BJ (cell line): ENCODE measurements at regions of chr19 and their contacts with region 1.

Region 1: DNA sequence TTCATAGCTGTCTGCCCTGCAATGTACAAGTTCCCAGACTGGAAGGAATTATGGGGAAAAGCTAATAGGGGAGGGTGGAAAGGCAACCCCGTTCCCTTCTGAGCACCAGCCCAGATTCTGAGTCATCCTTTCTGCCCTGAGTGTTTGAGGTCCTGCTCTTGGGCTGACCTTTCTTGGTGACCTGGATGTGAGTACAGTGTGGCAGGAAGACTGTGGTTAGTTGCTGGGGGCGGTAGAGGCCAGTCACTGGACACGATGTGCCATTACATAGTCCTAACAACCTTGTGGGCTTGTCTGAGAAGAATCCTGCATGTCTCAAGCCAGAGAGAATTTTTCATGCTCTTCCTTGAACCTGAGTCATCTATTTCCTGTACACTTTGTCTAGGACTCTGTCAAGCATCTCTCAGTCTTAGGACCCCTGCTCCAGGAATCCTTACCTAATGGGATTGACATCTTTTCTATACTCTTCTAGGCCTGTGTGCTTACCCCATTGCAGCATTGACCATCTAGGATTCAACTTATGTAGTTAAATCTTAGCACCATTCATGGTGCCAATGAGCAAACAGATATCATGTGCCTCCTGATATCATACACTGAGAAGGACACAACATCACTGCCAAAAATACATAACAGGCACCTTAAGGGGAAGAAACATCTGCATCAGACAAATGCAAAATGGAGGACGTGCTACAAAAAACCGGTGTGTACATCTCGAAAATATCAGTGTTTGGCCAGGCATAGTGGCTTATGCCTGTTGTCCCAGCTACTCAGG is 8.1 kb upstream of the ANGPTL4 start:
- DNase-seq: peak; percentile 95
- H3K4me3 ChIP-seq: no peak overlapping the region
- H3K27me3 ChIP-seq: no peaks in the 10 kb centered on the region; the same call in 1 of the 2 replicates
- CTCF ChIP-seq: no peak

Region 2: DNA sequence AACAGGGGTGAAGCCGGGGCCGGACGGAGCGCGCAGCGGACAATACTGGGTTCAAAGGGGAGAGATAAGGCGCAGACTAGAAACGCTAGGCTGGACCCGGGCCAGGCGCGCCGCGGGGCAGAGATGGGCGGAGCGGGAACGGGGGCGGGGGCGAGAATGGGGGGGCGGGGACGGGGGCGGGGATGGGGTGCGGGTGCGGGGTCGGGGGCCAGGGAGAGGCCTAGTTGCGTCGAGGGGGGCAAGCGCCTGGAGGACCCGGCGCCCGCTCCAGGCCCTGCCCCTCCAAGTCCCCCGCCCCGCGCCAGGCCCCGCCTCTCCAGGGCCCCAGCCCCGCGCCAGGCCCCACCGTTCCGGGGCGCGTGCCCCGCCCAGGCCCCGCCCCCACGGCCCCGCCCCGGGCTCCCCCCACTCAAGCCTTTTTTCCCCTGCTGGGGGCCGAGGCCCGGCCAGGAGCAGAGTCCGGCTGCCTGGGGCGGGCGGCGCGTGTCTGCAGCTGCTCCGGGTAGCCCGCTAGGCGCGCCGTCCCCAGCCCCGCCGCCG is 146.8 kb before region 1 on chr19 and contains the start of gene CERS4:
- CTCF ChIA-PET with region 1: no interaction called
- POLR2A ChIA-PET with region 1: no interaction called
- DNase-seq: no peak
- H3K4me3 ChIP-seq: peak within 1 kb of the TSS; percentile 61
- H3K27me3 ChIP-seq: peaks cover 10% of the 10 kb centered on the region
- CTCF ChIP-seq: no peak
- polyA plus RNA-seq, gene CERS4: 7.6 and 7.7 TPM in 2 replicates

Region 3: DNA sequence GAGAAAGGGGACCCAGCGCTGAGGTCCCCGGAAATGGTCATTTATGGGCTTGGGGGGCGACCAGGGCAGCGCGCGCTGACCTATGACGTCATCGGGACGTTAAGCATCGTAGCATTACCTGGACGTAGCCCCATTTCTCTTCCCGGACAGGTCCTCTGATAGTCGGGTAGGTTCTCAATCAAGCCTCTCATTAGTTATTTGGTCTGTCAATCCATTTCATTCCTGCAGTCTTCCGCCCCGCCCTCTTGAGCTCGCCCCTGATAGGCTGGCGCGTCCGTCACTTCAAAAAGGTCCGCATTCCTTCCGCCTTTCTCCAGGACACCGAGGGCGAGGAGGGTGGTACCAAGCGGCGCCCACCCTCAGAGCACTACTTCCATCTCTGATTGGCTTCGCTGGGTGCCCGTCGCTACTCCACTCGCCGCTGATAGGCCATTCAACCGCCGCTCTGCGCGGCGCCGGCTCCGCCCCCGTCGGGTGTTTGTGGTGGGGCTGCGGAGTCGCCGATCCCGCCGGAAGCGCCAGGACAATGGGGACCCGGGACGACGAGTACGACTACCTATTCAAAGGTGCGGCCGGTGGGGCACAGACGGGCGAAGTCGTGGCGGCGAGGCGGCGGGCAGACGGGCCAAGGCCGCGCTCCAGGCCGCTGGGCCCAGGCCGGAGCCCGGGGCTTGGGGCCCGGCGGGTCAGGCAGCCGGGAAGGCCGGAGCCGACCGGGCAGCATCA is 34.2 kb after region 1 on chr19 and contains the start of gene RAB11B:
- CTCF ChIA-PET with region 1: interaction called, 67 read pairs
- POLR2A ChIA-PET with region 1: interaction called, 4 read pairs
- DNase-seq: peak; percentile 99
- H3K4me3 ChIP-seq: peak within 1 kb of the TSS; percentile 79
- H3K27me3 ChIP-seq: no peaks in the 10 kb centered on the region
- CTCF ChIP-seq: no peak
- polyA plus RNA-seq, gene RAB11B: 27.3 and 50.0 TPM in 2 replicates

Region 4: GRCh38 chr19:8412783-8413628 is 57.2 kb after region 1 on chr19 and contains the start of gene MARCHF2:
- CTCF ChIA-PET with region 1: interaction called, 23 read pairs
- POLR2A ChIA-PET with region 1: no interaction called
- DNase-seq: peak; percentile 76
- H3K4me3 ChIP-seq: peak within 1 kb of the TSS; percentile 55
- H3K27me3 ChIP-seq: no peaks in the 10 kb centered on the region
- CTCF ChIP-seq: peak; percentile 65
- polyA plus RNA-seq, gene MARCHF2: 27.3 and 39.3 TPM in 2 replicates

Region 5: GRCh38 chr19:8505680-8506401 is 150.0 kb after region 1 on chr19:
- CTCF ChIA-PET with region 1: interaction called, 42 read pairs
- POLR2A ChIA-PET with region 1: no interaction called
- DNase-seq: no peak
- H3K4me3 ChIP-seq: peak overlapping the region; percentile 49
- H3K27me3 ChIP-seq: no peaks in the 10 kb centered on the region
- CTCF ChIP-seq: peak; percentile 95

Region 6: DNA sequence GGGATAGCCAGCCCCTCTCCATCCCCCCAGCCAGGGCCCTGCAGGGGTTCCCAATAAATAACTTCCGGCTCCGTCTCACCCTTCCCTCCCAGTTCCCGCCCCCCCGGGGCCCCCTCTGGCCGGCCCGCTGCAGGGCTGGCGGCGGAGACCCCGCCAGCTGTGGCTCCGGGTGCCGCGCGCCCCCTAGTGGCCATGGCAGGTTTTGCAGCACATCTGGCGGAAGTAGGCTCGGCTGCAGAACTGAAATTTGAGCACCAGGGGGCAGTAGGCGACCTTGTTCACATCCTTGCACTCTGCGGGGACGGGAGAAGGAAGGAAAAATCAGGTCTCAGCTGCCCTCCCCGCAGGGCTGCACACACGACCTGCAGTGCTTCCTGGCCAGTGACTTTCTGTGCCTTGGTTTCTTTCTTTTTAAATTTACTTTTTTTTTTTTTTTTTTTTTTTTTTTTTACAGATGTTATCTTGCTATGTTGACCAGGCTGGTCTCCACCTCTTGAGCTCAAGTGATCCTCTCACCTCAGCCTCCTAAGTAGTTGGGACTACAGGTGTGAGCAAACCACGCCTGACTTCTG is 225.0 kb after region 1 on chr19:
- CTCF ChIA-PET with region 1: interaction called, 75 read pairs
- POLR2A ChIA-PET with region 1: no interaction called
- DNase-seq: no peak
- H3K4me3 ChIP-seq: no peak overlapping the region
- H3K27me3 ChIP-seq: no peaks in the 10 kb centered on the region; the same call in 1 of the 2 replicates
- CTCF ChIP-seq: peak; percentile 96